Activated B cell treated with CpG ODN at 0.5 μM for 24 hours (primary cell): ENCODE measurements at regions of chr6 and their contacts with region 1.

Region 1: DNA sequence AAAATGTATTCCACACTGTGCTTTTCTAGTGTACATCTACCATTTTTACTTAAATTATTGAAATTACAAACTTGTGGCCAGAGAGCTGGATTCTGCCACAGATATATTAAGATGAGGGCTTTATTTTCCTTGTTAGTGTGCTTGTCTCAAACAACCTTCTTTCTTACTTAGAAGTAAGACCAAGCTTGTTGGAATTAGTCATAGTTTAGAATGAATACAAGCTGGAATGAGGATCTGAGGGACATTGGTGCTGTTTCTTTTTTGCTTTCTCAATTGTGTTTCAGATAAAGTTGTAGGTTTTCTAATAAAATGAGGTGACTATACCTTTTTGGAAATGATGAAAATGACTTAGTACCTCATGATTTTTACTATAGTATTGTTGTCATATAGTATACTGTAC is 40.3 kb downstream of the UBR2 start:
- DNase-seq: no peak
- ATAC-seq: no peak
- H3K4me3 Mint-ChIP-seq: no peak overlapping the region
- H3K27ac Mint-ChIP-seq: no peak overlapping the region
- H3K4me1 Mint-ChIP-seq: no peaks in the 10 kb centered on the region
- H3K27me3 Mint-ChIP-seq: no peaks in the 10 kb centered on the region
- CTCF ChIP-seq: no peak

Region 2: DNA sequence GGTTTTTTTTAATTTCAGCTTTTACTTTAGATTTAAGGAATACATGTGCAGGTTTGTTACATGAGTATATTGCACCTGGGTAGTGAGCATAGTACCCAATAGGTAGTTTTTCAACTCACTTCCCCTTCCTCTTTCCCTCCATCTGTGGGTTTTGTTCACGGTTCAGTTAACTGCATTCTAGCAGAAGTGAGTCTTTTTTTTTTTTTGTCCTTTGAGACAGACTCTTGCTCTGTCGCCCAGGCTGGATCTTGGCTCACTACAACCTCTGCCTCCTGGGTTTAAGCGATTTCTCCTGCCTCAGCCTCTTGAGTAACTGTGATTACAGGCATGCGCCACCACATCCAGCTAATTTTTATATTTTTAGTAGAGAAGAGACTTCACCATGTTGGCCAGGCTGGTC is 31.6 kb before region 1 on chr6:
- CTCF ChIA-PET with region 1: no interaction called
- POLR2A ChIA-PET with region 1: no interaction called
- intact Hi-C with region 1: loop called (anchors 2 kb)
- DNase-seq: peak; percentile 25
- ATAC-seq: peak; percentile 91
- H3K4me3 Mint-ChIP-seq: peak overlapping the region; percentile 63
- H3K27ac Mint-ChIP-seq: peak overlapping the region; percentile 91
- H3K4me1 Mint-ChIP-seq: peaks cover 47% of the 10 kb centered on the region
- H3K27me3 Mint-ChIP-seq: no peaks in the 10 kb centered on the region
- CTCF ChIP-seq: no peak